ENCODE measurements at regions of chr6 and their contacts with region 1.

Region 1: DNA sequence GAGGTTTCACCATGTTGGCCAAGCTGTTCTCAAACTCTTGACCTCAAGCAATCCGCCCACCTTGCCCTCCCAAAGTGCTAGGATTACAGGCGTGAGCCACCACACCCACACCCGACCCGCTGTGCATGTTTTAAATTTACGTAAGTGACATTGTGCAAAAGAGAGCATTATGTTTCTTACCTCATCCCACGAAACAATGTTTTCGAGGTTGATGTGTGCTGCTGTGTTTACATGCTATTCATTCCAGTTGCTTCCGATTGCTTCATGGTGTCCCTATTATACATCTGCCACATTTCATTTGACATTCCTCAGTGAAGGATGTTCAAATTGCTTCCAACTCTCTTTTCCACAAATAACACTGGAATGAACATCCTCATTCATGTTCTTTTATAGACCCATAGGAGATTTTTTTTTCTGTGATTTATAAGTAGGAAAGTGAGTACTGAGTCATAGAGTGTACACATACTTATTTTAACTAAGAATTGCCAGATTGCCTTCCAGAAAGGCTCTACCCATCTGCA is 403.9 kb upstream of the JARID2 start:
- DNase-seq: peak; percentile 53 to 84
- ATAC-seq: peak; percentile 94 to 96
- H3K4me3 ChIP-seq: no peak overlapping the region
- H3K27ac ChIP-seq: peak overlapping the region in 2 of 4 donors; percentile 36 to 59
- H3K4me1 ChIP-seq: no peaks in the 10 kb centered on the region
- H3K27me3 ChIP-seq: no peaks in the 10 kb centered on the region
- CTCF ChIP-seq: no peak
- POLR2A ChIP-seq: no peak

Region 2: GRCh38 chr6:14883921-14884320 is 42.0 kb after region 1 on chr6:
- in situ Hi-C with region 1: no loop called
- intact Hi-C with region 1: loop called (anchors 2 kb)
- DNase-seq: no peak
- ATAC-seq: no peak
- H3K4me3 ChIP-seq: no peak overlapping the region
- H3K27ac ChIP-seq: peak overlapping the region in 2 of 4 donors; percentile 86 to 94
- H3K4me1 ChIP-seq: peaks cover 44 to 67% of the 10 kb centered on the region in 2 donors
- H3K27me3 ChIP-seq: no peaks in the 10 kb centered on the region
- CTCF ChIP-seq: no peak
- POLR2A ChIP-seq: no peak

Region 3: DNA sequence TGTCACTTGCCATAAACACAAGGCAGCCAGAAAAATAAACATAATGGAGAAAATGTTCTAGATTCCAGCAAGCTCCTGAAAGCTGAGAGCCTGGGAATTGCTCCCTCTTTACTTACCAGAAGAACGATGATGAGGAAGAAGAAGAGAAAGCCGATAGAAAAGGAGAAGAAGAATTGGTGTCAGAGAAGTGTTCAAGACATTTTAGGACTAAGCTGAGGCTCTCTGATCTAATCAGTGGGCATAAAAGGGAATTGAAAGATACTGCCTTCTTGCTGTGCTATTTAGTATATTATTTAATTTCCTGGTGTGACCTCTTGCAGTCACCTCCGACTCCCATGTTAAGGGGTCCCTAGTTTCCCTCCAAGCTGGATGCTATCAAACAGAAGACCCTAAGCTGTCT is 87.3 kb after region 1 on chr6:
- in situ Hi-C with region 1: no loop called
- intact Hi-C with region 1: loop called (anchors 2 kb)
- DNase-seq: no peak
- ATAC-seq: no peak
- H3K4me3 ChIP-seq: no peak overlapping the region
- H3K27ac ChIP-seq: no peak overlapping the region
- H3K4me1 ChIP-seq: peaks cover 31 to 36% of the 10 kb centered on the region in 2 donors
- H3K27me3 ChIP-seq: no peaks in the 10 kb centered on the region
- CTCF ChIP-seq: no peak
- POLR2A ChIP-seq: no peak

Region 4: GRCh38 chr6:15036690-15037245 is 194.8 kb after region 1 on chr6:
- in situ Hi-C with region 1: no loop called
- intact Hi-C with region 1: loop called (anchors 2 kb)
- DNase-seq: peak; percentile 93 to 98
- ATAC-seq: peak; percentile 93 to 96
- H3K4me3 ChIP-seq: peak overlapping the region; percentile 33 to 48 (median 38)
- H3K27ac ChIP-seq: peak overlapping the region; percentile 85 to 91 (median 88)
- H3K4me1 ChIP-seq: peaks cover 7 to 27% of the 10 kb centered on the region in 2 donors
- H3K27me3 ChIP-seq: no peaks in the 10 kb centered on the region
- CTCF ChIP-seq: no peak
- POLR2A ChIP-seq: peak; percentile 33 to 63

Measured in gastrocnemius medialis (tissue), 4 donors.